ENCODE measurements at regions of chr20 and their contacts with region 1.

Region 1: DNA sequence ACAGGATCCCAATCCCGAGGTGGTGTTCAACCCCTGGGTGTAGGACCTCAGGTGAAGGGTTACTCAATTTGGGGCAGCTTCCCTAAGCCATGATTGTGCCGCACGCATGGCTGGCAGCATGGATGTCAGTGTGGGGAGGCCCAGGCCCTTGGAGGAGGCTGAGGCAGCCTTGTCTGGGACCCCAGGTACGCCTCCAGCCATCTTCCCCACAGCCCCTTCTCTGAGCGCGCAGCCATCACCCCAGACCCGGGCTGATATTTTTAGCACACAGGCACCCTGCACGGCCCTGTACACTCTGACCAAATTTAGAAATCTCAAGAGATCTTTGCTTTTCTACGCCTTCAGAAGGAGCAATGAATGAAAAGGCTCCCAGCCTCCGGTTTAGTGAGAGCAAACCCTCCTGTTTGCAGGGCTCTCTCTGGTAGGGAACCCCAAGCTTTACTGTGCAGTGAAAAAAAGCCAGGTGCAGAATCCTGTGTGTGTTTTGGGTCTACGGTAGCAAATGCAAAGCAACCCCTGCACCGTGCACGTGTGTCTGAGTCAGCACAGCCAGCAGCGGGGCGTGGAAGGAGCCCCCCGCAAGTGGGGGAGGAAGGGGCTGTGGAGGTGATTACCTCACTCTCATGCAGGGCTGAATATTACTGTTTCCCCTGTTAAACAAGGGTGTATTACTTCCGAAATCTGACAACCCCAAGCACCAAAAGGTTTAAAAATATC is 44.3 kb downstream of the CTCFL start:
- DNase-seq: no peak
- H3K4me3 ChIP-seq: no peak overlapping the region
- H3K27ac ChIP-seq: no peak overlapping the region
- H3K4me1 ChIP-seq: peaks cover 9 to 18% (median 13%) of the 10 kb centered on the region in 4 experiments
- H3K27me3 ChIP-seq: no peaks in the 10 kb centered on the region; a peak in 1 of 7 replicates
- CTCF ChIP-seq: no peak
- EP300 ChIP-seq: no peak
- POLR2A ChIP-seq: no peak
- RAD21 ChIP-seq: no peak

Region 2: GRCh38 chr20:57142667-57143066 is 337.9 kb before region 1 on chr20:
- CTCF ChIA-PET with region 1: no interaction called
- POLR2A ChIA-PET with region 1: no interaction called
- DNase-seq: no peak
- H3K4me3 ChIP-seq: no peak overlapping the region
- H3K27ac ChIP-seq: no peak overlapping the region
- H3K4me1 ChIP-seq: no peaks in the 10 kb centered on the region
- H3K27me3 ChIP-seq: 0 out of 7 replicates have a peak, but pooled peaks cover 0 to 2% (median 0%) of the 10 kb centered on the region in 4 experiments
- CTCF ChIP-seq: no peak
- EP300 ChIP-seq: no peak
- POLR2A ChIP-seq: no peak
- RAD21 ChIP-seq: no peak

Region 3: GRCh38 chr20:57464715-57465211 is 15.8 kb before region 1 on chr20:
- CTCF ChIA-PET with region 1: interaction called, 23 read pairs
- POLR2A ChIA-PET with region 1: no interaction called
- DNase-seq: no peak
- H3K4me3 ChIP-seq: no peak overlapping the region
- H3K27ac ChIP-seq: 0 out of 2 replicates have a peak overlapping the region, but pooled peaks have one; percentile 7
- H3K4me1 ChIP-seq: peaks cover 0 to 11% (median 3%) of the 10 kb centered on the region in 4 experiments; a peak in 5 of 7 replicates
- H3K27me3 ChIP-seq: no peaks in the 10 kb centered on the region; a peak in 1 of 7 replicates
- CTCF ChIP-seq: peak; percentile 48 to 61 (median 55)
- EP300 ChIP-seq: no peak
- POLR2A ChIP-seq: no peak
- RAD21 ChIP-seq: peak in 1 of 2 experiments; percentile 4; a peak in 1 of 4 replicates